ENCODE measurements at regions of chr12 and their contacts with region 1.

Region 1: DNA sequence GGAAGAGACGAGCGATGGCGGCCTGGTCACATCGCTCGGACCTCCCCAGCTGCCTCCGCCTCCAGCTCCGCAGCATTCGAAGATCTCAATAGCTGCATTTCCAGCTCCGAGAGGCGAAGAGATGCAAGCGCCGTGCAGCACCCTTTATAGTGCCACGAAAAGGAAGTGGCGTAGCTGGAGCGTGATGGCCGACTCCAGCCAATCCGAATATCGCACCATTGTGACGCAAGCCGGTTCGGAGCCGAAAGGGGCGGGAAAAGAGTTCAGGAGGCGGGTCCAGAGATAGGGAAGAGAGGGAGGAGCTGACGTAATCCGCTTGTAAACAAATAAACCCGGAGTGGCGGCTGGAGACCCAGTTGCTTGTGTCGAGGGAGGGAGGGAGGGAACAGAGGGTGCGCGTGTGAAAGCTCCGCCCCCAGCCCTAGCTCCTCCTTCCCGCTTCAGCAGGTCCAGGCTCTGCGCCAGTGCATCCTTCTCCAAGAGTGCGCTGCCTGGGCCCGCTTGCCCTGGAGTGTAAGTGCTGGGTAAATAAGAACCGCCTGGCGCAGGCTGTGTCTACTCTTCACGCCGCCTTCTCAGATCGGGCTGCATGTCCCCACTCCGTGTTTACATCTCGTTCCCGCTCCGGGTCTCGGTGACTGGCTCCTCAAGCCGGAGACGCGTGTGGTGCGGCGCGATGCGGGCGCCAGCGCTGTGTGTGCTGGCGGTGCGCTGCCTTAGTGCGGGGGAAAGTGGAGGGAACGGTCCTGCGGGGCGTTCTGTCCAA is at the start of gene BTG1:
- DNase-seq: peak; percentile 100
- H3K4me3 Mint-ChIP-seq: peak within 1 kb of the TSS; percentile 99
- H3K27ac Mint-ChIP-seq: peak within 1 kb of the TSS; percentile 99
- H3K4me1 Mint-ChIP-seq: peaks cover 28% of the 10 kb centered on the region
- H3K27me3 Mint-ChIP-seq: no peaks in the 10 kb centered on the region
- total RNA-seq, gene BTG1: 84.2 and 90.8 TPM in 2 replicates

Region 2: DNA sequence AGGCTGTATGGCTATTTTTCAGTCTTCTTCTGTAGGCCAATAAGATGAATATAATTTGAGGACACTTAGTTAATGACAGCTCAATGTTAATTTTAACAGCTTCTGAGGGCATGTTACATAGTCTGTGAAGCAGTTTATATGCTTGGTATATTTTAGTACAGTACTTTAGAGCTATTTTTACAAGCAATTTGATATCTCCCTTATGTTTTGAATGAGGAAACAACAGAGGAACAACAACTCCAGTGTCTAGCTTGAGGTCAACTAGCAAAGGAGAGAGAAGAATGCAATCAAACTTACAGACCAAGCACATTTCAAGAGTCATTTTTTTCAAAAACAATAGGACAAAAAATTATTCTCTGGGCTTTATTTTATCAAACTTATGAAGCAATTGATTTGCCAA is 494.2 kb before region 1 on chr12:
- intact Hi-C with region 1: no loop called
- DNase-seq: no peak
- H3K4me3 Mint-ChIP-seq: no peak overlapping the region
- H3K27ac Mint-ChIP-seq: no peak overlapping the region
- H3K4me1 Mint-ChIP-seq: no peaks in the 10 kb centered on the region
- H3K27me3 Mint-ChIP-seq: no peaks in the 10 kb centered on the region

Region 3: GRCh38 chr12:91811481-91812287 is 334.2 kb before region 1 on chr12:
- intact Hi-C with region 1: loop called (anchors 2 kb)
- DNase-seq: peak; percentile 89
- H3K4me3 Mint-ChIP-seq: no peak overlapping the region
- H3K27ac Mint-ChIP-seq: no peak overlapping the region
- H3K4me1 Mint-ChIP-seq: peaks cover 6% of the 10 kb centered on the region
- H3K27me3 Mint-ChIP-seq: no peaks in the 10 kb centered on the region

Region 4: GRCh38 chr12:92130999-92131398 is 14.9 kb before region 1 on chr12:
- intact Hi-C with region 1: loop called (anchors 1 kb)
- DNase-seq: peak; percentile 59
- H3K4me3 Mint-ChIP-seq: peak overlapping the region; percentile 82
- H3K27ac Mint-ChIP-seq: peak overlapping the region; percentile 94
- H3K4me1 Mint-ChIP-seq: peaks cover 68% of the 10 kb centered on the region
- H3K27me3 Mint-ChIP-seq: no peaks in the 10 kb centered on the region

Region 5: GRCh38 chr12:92218394-92219077 is 72.6 kb after region 1 on chr12:
- intact Hi-C with region 1: loop called (anchors 2 kb)
- DNase-seq: no peak
- H3K4me3 Mint-ChIP-seq: peak overlapping the region; percentile 6
- H3K27ac Mint-ChIP-seq: peak overlapping the region; percentile 58
- H3K4me1 Mint-ChIP-seq: peaks cover 23% of the 10 kb centered on the region
- H3K27me3 Mint-ChIP-seq: no peaks in the 10 kb centered on the region

Region 6: GRCh38 chr12:92403210-92404175 is 257.6 kb after region 1 on chr12:
- intact Hi-C with region 1: loop called (anchors 1 kb)
- DNase-seq: peak; percentile 93
- H3K4me3 Mint-ChIP-seq: peak overlapping the region; percentile 69
- H3K27ac Mint-ChIP-seq: peak overlapping the region; percentile 94
- H3K4me1 Mint-ChIP-seq: peaks cover 78% of the 10 kb centered on the region
- H3K27me3 Mint-ChIP-seq: no peaks in the 10 kb centered on the region

Region 7: DNA sequence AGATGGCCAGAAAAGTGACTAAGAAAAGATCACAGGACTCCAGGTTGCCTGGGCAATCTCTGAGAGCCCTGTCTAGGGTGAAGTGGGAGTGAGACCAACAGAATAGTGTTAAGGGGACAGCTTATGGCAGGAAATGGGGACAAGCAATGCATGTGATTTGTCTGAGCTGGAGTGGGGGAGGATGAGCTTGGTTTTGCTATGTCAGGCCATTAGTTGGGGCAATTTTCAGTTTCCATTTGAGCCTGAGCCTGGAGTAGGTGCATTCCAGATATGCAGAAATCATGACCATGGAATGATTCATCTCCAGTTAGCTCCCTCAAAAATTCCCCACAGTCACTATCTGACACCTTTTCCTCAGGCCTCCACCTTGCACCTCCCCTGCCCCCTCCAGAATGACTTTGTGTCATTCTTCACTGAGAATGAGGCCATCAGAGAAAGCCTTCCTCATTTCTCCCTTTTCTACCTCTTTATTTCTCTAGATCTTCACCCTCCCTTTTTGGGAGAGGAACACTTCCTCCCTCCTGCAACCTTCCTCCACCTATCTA is 406.0 kb after region 1 on chr12:
- intact Hi-C with region 1: loop called (anchors 2 kb)
- DNase-seq: peak; percentile 71
- H3K4me3 Mint-ChIP-seq: no peak overlapping the region
- H3K27ac Mint-ChIP-seq: no peak overlapping the region
- H3K4me1 Mint-ChIP-seq: peaks cover 39% of the 10 kb centered on the region
- H3K27me3 Mint-ChIP-seq: no peaks in the 10 kb centered on the region

Region 8: GRCh38 chr12:92649511-92650227 is 503.8 kb after region 1 on chr12:
- intact Hi-C with region 1: loop called (anchors 5 kb)
- DNase-seq: peak; percentile 87
- H3K4me3 Mint-ChIP-seq: no peak overlapping the region
- H3K27ac Mint-ChIP-seq: no peak overlapping the region
- H3K4me1 Mint-ChIP-seq: peaks cover 8% of the 10 kb centered on the region
- H3K27me3 Mint-ChIP-seq: no peaks in the 10 kb centered on the region

Measured in activated CD4-positive, alpha-beta T cell treated with anti-CD3 and anti-CD28 coated beads, Interleukin-2, amount 10 ng/mL, durations not matched to agents 24 days and 14 days (primary cell).